ENCODE measurements at regions of chr20 and their contacts with region 1.

Region 1: DNA sequence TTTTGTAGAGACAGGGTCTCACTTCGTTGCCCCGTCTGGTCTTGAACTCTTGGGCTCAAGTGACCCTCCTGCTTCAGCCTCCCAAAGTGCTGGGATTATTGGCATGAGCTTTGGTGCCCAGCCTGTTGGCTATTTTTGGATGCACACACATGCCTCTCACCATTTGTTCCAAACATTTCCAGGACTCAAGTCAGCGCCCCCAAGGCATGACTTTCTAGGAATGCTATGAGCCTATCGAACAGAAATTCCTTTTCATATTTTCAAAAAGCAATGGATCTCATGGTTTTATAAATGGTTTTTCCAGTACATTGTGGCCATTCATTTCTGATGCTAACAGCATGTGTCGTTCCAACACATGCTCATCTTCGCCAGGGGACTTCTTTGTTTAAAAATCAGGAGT is 119.3 kb upstream of the NAA20 start:
- DNase-seq: no peak
- ATAC-seq: no peak
- H3K4me3 ChIP-seq: no peak overlapping the region
- H3K27ac ChIP-seq: no peak overlapping the region
- H3K4me1 ChIP-seq: no peaks in the 10 kb centered on the region
- H3K27me3 ChIP-seq: no peaks in the 10 kb centered on the region
- CTCF ChIP-seq: no peak

Region 2: DNA sequence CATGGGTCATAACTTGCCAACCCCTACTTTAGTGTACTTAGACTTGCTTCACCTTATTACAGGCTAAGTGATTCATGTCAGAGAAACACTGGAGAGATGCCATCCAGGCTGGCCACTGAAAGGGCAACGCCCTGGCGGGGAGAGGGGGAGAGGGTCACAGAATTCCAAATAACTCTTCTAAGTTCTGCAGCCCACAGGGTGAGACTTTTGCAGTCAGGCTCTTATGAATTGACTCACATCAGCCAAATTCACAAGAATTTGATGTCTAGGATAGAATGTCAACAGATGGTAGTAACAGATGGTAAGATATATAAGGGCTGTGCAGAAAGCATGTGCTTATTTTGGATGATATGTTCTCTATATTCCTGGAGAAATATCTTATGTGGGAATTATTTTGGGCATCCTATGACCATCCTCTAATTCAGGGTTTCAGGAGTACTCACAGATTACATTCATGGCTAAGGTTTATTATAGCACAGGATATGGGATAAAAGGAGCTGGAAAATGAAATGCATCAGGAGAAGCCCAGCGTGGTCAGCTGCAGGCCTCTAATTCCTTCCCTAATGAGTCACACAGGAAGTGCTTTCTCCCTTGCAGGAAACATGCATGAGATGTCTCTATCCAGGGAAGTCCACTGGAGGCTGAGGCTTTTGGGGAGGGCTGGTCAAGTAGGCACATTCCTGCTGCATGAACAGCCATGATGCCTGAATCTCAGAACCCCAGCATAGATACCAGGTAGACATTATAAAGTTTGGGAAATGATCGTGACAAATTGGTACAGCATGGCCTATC is 198.5 kb before region 1 on chr20:
- intact Hi-C with region 1: no loop called
- DNase-seq: no peak
- ATAC-seq: no peak
- H3K4me3 ChIP-seq: no peak overlapping the region
- H3K27ac ChIP-seq: no peak overlapping the region
- H3K4me1 ChIP-seq: no peaks in the 10 kb centered on the region
- H3K27me3 ChIP-seq: no peaks in the 10 kb centered on the region
- CTCF ChIP-seq: no peak

Region 3: DNA sequence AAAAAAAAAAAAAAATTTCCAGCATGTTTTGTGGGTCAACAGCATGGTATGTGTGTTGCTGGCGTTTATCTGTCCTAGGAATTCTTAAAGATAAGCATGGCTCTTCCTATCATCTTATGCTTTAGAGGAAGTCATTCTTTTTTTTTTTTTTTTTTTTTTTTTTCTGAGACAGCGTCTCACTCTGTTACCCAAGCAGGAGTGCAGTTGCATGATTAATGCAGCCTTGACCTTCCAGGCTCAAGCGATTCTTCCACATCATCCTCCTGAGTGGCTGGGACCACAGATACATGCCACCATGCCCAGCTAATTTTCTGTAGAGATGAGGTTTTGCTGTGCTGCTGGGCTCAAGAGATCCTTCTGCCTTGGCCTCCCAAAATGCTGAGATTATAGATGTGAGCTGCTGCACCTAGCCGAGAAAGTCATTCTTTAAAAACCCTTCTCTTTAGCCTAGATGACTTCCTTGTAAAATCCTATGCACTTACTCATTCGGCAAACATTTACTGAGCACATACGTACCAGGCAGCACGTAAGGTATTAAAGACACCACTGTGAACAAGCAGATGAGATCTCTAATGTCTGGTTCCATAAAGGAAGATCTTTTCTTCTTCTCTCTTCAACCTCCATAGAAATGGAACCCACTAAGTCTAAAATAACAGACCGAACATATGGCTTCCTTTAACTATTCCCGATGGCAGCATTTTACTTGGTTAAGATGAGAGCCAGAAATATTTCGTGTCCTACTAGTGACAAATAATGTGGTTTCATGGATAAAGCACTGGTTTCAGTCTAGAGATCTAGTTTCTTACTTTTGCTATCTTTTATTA is 17.4 kb before region 1 on chr20:
- intact Hi-C with region 1: loop called in 1 of 3 experiments (anchors 2 kb)
- DNase-seq: no peak
- ATAC-seq: peak in 1 of 4 donors; percentile 26
- H3K4me3 ChIP-seq: no peak overlapping the region
- H3K27ac ChIP-seq: no peak overlapping the region
- H3K4me1 ChIP-seq: no peaks in the 10 kb centered on the region
- H3K27me3 ChIP-seq: no peaks in the 10 kb centered on the region
- CTCF ChIP-seq: no peak

Measured in pancreas (tissue), 10 donors.